Spleen (tissue), 13 donors: ENCODE measurements at regions of chr16 and their contacts with region 1.

Region 1: DNA sequence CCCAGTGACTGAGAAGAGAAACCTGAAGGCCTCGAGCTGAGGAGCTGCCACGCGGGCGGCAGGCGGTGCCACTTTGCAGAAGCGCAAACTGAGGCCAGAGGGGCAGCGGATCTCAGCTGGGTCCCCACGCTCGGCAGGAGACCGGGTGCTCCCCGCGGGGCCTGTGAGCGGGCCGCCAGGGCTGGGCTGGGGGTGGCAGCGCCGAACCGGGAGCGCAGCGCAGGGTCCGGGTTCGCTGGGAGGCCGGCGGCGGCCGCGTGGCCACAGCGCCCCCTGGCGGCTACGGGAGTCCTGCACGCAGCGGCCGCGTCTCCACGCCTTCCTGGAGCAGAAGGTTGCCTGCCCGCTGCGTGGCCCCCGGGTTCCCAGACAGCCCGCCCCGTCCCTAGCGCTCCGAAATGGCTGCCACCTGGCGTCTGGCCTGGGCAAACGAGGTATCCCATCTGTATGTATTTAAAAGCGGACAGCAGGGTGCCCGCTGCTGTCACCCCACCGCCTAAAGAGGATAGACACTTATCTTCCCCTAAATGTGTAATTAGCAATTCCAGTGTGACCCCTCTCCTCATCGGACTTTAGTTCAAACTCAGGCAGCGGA is 96.1 kb upstream of the CDH5 start:
- DNase-seq: peak; percentile 94
- H3K4me3 ChIP-seq: peak overlapping the region in 4 of 8 donors; percentile 24 to 60 (median 28)
- H3K27ac ChIP-seq: peak overlapping the region in 7 of 8 donors; percentile 25 to 75 (median 65)
- H3K4me1 ChIP-seq: peaks cover 0 to 34% (median 12%) of the 10 kb centered on the region in 6 donors
- H3K27me3 ChIP-seq: peaks cover 0 to 66% (median 8%) of the 10 kb centered on the region in 7 donors
- CTCF ChIP-seq: peak; percentile 47 to 97 (median 93)
- POLR2A ChIP-seq: no peak

Region 2: DNA sequence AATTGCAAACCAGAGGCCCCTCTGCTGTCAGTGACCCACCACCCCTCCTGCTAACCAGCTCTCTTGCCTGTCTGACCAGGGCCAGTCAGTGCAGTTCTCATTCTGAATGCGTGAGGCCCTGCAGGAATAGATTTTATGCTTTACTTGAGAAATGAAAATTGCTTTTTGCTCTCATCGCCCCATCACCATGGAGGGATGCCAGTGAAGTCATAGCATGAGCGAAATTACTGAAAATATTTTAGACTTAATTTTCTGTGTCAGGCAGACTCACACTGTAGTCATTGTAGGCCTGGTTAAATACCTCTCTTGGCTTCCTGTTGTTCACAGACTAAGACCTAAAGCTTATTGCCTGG is 394.4 kb before region 1 on chr16:
- intact Hi-C with region 1: loop called (anchors 5 kb)
- DNase-seq: no peak
- H3K4me3 ChIP-seq: no peak overlapping the region
- H3K27ac ChIP-seq: no peak overlapping the region
- H3K4me1 ChIP-seq: peaks cover 0 to 6% (median 0%) of the 10 kb centered on the region in 6 donors
- H3K27me3 ChIP-seq: no peaks in the 10 kb centered on the region
- CTCF ChIP-seq: no peak
- POLR2A ChIP-seq: no peak

Region 3: GRCh38 chr16:66186251-66186785 is 84.1 kb before region 1 on chr16:
- intact Hi-C with region 1: no loop called
- DNase-seq: no peak
- H3K4me3 ChIP-seq: no peak overlapping the region
- H3K27ac ChIP-seq: no peak overlapping the region
- H3K4me1 ChIP-seq: peaks cover 0 to 17% (median 1%) of the 10 kb centered on the region in 6 donors
- H3K27me3 ChIP-seq: peaks cover 0 to 16% (median 0%) of the 10 kb centered on the region in 7 donors
- CTCF ChIP-seq: no peak
- POLR2A ChIP-seq: no peak